RWPE1 (cell line): ENCODE measurements at regions of chr6 and their contacts with region 1.

Region 1: DNA sequence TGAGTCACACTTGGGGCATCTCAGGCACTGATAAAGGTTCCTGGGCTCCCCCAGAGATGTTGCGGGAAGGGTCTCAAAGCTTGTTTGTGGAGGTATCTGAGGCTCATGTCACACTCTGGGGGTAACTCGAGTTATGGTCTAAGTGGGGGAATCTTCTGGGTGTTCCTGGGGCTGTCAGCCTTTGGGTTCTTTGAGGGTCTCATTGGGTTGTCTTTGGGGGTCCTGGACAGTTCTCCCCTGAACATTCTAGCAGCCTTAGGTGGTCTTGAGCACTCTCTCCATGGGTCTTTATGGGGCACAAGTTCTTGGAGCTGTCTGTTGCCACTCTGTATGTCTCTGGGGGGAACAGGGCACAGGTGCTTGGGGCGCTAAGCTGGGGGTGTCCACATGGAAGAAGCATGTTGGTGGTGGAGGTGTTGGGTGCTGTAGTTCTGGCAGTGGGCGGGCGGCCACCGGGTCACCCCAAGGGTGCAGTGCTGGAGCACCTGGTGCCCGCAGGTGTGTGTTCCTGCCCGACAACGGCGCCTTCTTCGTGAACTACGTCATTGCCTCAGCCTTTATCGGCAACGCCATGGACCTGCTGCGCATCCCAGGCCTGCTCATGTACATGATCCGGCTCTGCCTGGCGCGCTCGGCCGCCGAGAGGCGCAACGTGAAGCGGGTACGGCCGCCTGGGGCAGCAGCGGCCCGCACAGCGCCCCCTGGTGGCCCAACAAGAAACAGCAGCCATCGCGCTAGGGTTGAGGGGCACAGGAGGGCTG is 7.1 kb upstream of the CAPN11 start:
- DNase-seq: peak; percentile 62
- H3K27ac ChIP-seq: no peak overlapping the region
- CTCF ChIP-seq: peak; percentile 96

Region 2: GRCh38 chr6:43891072-43891870 is 260.3 kb before region 1 on chr6:
- CTCF ChIA-PET with region 1: no interaction called
- POLR2A ChIA-PET with region 1: no interaction called
- DNase-seq: no peak
- H3K27ac ChIP-seq: no peak overlapping the region
- CTCF ChIP-seq: no peak

Region 3: DNA sequence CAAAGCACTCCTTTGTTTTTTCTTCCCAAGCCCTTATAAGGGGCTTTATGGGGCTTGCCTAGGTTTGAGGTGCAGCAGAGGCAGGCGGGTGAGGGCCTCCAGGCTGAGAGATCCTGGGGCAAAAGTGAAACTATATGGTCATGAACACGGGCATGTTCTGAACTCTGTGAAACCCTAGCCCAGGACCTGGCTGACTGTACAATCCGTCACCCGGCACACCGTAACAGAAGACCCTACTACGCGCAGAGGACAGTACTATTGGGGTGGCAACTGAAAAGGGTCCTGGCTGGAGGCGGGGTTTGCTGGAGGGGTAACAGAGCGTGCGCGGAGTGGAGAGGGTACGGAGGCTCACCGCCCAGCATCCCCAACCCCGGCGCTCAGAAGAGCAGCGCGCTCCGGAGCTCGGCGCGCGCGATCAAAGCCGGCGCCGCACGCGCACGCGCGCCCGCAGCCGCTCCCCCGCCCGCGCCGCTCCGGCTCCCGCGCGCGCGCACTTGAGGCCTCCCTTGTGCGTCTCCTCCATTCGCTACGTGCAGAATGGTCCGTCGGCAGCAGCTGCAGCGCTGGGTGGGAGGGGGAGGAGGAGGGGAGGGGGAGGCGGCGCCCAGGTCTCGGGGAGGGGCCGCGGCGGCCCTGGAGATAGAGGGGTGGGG is 78.4 kb before region 1 on chr6:
- CTCF ChIA-PET with region 1: no interaction called
- POLR2A ChIA-PET with region 1: no interaction called
- DNase-seq: peak; percentile 76
- H3K27ac ChIP-seq: peak overlapping the region; percentile 65
- CTCF ChIP-seq: no peak

Region 4: GRCh38 chr6:44161997-44162338 is 10.4 kb after region 1 on chr6:
- CTCF ChIA-PET with region 1: interaction called, 13 read pairs
- POLR2A ChIA-PET with region 1: no interaction called
- DNase-seq: peak; percentile 64
- H3K27ac ChIP-seq: no peak overlapping the region
- CTCF ChIP-seq: no peak

Region 5: GRCh38 chr6:44356487-44356886 is 205.0 kb after region 1 on chr6:
- CTCF ChIA-PET with region 1: no interaction called
- POLR2A ChIA-PET with region 1: no interaction called
- DNase-seq: no peak
- H3K27ac ChIP-seq: no peak overlapping the region
- CTCF ChIP-seq: no peak